HEK293T (cell line): ENCODE measurements at regions of chr11 and their contacts with region 1.

Region 1: DNA sequence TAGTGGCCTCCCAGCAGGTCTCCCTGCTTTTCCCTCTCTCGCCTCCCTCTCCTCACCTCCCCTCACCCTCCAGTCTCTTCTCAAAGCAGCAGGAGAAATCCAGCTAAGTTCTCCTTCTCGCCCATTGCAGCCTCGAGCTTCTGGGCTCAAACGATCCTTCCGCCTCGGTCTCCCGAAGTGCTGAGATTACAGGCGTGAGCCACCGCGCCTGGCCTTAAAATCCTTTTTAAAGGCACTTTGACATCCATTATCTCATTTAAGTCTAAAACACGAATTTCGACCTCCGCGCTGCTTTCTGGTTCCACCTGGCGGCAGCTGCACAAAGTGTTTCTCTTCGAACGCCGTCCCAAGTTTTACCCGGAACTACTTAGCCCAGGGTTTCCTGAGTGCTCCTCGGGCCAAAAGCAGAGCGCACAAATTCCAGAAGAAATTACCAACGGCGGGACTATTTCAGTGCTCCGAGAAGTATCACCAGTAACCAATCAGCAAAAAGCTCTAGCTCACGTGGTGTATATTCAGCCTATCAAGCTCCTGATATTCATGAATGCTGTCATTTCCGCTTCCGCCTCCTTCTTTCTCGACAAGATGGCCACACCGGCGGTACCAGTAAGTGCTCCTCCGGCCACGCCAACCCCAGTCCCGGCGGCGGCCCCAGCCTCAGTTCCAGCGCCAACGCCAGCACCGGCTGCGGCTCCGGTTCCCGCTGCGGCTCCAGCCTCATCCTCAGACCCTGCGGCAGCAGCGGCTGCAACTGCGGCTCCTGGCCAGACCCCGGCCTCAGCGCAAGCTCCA is at the start of gene EIF3F:
- DNase-seq: peak; percentile 89

Region 2: DNA sequence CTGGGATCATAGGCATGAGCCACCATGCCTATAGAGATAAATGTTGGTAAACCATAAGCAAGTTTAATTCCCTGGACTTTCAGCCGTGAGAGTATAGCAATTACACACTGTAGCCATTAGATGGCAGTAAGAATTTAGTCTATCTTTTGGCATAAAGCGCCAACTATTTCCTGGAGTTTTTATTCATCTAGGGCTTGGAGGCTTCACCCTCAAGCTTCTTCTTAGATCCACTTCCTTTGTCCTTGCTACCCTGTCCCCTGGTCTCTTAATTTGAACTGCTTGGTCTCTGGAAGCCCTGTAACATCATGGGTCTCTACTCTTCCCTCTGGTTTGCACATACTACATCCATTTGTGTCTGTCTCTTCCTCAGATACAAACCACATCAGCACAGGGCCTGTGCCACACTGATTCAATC is 94.1 kb before region 1 on chr11:
- CTCF ChIA-PET with region 1: interaction called, 22 read pairs
- POLR2A ChIA-PET with region 1: interaction called, 10 read pairs
- DNase-seq: peak; percentile 63